ENCODE measurements at regions of chr1 and their contacts with region 1.

Region 1: GRCh38 chr1:77683160-77684148 is 996 bp upstream of the ZZZ3 start:
- DNase-seq: peak; percentile 85 to 89
- ATAC-seq: peak; percentile 75 to 81
- H3K4me3 ChIP-seq: peak overlapping the region; percentile 87 to 93 (median 88)
- H3K27ac ChIP-seq: peak overlapping the region; percentile 86 to 99 (median 98)
- H3K4me1 ChIP-seq: peaks cover 35 to 37% of the 10 kb centered on the region in 2 donors
- H3K27me3 ChIP-seq: no peaks in the 10 kb centered on the region
- CTCF ChIP-seq: peak; percentile 84 to 97 (median 95)
- POLR2A ChIP-seq: peak; percentile 56 to 60

Region 2: DNA sequence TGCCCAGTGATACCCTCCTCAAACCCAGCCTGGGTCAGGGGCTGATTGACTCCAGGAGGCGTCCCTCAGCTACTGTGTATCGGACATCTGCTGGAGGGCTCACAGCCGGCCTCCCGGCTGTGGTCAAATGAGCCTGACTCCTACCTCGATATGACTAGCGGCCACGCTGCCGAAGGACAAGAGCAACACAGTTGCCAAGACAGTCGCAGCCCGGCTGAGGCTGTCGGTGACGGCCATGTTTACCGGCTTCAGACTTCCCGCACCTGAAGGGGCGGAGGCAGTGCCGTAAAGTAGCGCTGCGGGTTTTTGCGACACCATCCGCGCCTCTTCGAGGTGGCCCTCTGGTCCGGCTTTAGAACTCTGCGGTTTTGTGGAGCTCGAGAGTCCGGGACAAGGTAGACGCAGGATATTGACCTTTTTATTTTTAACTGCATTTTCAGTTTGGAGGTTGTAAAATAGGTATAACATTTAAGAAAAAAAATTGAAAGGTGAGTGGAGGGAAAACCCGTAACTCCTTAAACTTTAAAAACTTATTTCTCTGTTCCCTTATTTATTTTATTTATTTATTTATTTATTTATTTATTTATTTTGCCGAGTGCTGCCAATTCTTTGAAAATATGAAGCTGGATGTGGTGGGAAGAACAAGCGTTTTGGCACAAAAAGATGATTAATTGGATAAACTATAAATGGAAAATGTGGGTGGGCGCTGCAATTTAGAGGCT is 464.1 kb before region 1 on chr1 and contains the start of gene PIGK:
- in situ Hi-C with region 1: no loop called
- intact Hi-C with region 1: loop called (anchors 5 kb)
- DNase-seq: peak; percentile 73 to 84
- ATAC-seq: peak; percentile 94 to 97
- H3K4me3 ChIP-seq: peak within 1 kb of the TSS; percentile 77 to 93 (median 88)
- H3K27ac ChIP-seq: peak within 1 kb of the TSS; percentile 87 to 96 (median 90)
- H3K4me1 ChIP-seq: peaks cover 10 to 16% of the 10 kb centered on the region in 2 donors
- H3K27me3 ChIP-seq: no peaks in the 10 kb centered on the region
- CTCF ChIP-seq: no peak
- POLR2A ChIP-seq: no peak
- total RNA-seq, gene PIGK: 9.0 to 12.6 (median 11.2) TPM

Region 3: GRCh38 chr1:77759071-77760028 is 75.9 kb after region 1 on chr1 and contains the start of gene USP33:
- in situ Hi-C with region 1: no loop called
- intact Hi-C with region 1: loop called (anchors 2 kb)
- DNase-seq: peak; percentile 78 to 84
- ATAC-seq: peak; percentile 88 to 93
- H3K4me3 ChIP-seq: peak within 1 kb of the TSS; percentile 84 to 100 (median 94)
- H3K27ac ChIP-seq: peak within 1 kb of the TSS; percentile 82 to 97 (median 88)
- H3K4me1 ChIP-seq: peaks cover 29 to 36% of the 10 kb centered on the region in 2 donors
- H3K27me3 ChIP-seq: no peaks in the 10 kb centered on the region
- CTCF ChIP-seq: no peak
- POLR2A ChIP-seq: peak; percentile 78 to 85
- total RNA-seq, gene USP33: 31.1 to 51.8 (median 34.6) TPM

Region 4: DNA sequence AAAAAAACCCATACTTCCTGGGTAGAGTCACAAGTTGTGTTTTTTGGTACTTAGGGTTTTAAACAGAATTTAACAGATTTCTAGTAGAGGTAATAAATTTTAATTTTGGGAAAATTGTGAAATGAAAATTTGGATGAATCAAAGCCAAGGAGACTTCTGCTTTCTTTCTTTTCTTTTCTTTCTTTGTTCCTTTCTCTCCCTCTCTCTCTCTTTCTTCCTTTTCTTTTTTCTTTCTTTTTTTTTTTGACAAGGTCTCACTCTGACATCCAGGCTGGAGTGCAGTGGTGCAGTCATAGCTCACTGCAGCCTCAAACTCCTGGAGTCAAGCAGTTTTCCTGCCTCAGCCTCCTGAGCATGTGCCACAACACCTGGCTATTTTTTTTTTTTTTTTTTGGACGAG is 158.1 kb after region 1 on chr1:
- in situ Hi-C with region 1: no loop called
- intact Hi-C with region 1: no loop called
- DNase-seq: no peak
- ATAC-seq: no peak
- H3K4me3 ChIP-seq: no peak overlapping the region
- H3K27ac ChIP-seq: no peak overlapping the region
- H3K4me1 ChIP-seq: peaks cover 12 to 15% of the 10 kb centered on the region in 2 donors
- H3K27me3 ChIP-seq: no peaks in the 10 kb centered on the region
- CTCF ChIP-seq: no peak
- POLR2A ChIP-seq: no peak

Region 5: DNA sequence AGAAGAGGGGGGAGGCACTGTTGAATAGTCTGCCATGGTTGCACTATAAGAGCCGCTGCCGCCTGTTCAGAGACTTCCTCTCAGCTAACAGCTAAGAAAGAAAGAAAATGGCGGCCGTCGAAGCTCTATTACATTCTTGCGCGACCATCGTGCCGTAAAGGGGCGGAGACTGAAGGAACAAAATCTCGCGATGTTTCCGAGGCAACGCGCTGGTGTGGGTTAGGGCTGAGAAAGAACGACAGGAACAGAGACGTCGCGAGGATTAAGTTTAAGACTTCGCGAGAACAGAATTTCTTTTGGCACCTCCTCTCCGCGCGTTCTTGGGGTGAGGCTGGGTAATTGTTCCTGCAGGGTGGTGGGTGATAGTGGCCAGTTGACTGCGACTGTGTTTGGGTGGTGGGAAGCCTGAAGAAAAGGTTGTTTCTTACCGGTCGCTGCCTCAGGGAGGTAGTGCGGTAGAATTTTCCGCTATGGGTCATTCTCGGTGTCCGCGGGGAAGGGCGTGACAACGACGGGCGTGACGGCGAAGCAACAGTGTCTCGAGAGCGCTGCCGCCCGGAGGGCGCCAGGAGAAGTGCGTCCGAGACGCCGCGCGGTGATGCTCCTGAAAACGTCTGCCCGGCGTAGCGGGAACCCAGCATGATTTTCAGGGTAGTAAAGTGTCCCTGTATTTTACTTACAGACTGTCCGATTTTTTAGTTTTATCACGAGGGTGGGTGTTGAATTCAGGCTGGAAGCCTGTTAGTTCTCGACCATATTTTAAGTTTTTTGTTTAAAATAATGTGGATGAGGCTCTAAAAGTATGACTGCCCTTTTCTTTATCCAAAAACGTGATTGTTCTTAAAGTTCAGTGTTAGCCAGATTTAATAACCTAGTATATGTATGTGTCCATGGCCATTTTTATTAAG is 295.8 kb after region 1 on chr1 and contains the start of gene FUBP1:
- in situ Hi-C with region 1: no loop called
- intact Hi-C with region 1: loop called (anchors 1 kb)
- DNase-seq: peak; percentile 95 to 96
- ATAC-seq: peak; percentile 88 to 91
- H3K4me3 ChIP-seq: peak within 1 kb of the TSS; percentile 69 to 82 (median 79)
- H3K27ac ChIP-seq: peak within 1 kb of the TSS; percentile 91 to 97 (median 94)
- H3K4me1 ChIP-seq: peaks cover 52 to 54% of the 10 kb centered on the region in 2 donors
- H3K27me3 ChIP-seq: no peaks in the 10 kb centered on the region
- CTCF ChIP-seq: peak; percentile 68 to 83 (median 81)
- POLR2A ChIP-seq: peak; percentile 80 to 81
- total RNA-seq, gene FUBP1: 25.6 to 64.3 (median 47.8) TPM

Measured in gastrocnemius medialis (tissue), 4 donors.